ENCODE measurements at regions of chr17 and their contacts with region 1.

Region 1: GRCh38 chr17:6000426-6000825 is 69.8 kb upstream of the WSCD1 start:
- DNase-seq: no peak
- H3K4me3 ChIP-seq: no peak overlapping the region
- H3K27ac ChIP-seq: no peak overlapping the region
- H3K4me1 ChIP-seq: peaks cover 0 to 39% (median 10%) of the 10 kb centered on the region in 4 donors
- H3K27me3 ChIP-seq: no peaks in the 10 kb centered on the region
- CTCF ChIP-seq: no peak

Region 2: DNA sequence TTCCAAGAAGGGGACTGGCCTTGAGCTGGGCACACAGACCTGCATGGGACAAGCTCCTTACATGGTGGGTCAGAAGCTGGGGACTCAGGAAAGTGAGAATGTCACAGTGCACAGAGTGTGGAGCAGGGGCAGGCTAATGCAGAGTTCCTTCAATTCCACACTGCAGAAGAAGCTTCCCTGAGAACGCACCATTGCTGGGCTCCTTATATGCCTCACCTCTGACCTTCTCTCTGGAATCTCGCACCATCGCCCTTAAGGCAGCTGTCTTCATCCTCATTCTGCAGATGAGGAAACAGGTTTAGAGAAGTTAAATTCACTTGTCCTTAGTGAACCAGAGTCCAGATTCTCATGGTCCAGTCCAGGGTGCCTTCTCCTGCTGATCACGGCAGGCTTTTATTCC is 89.2 kb before region 1 on chr17:
- intact Hi-C with region 1: no loop called
- DNase-seq: no peak
- H3K4me3 ChIP-seq: no peak overlapping the region
- H3K27ac ChIP-seq: no peak overlapping the region
- H3K4me1 ChIP-seq: no peaks in the 10 kb centered on the region
- H3K27me3 ChIP-seq: no peaks in the 10 kb centered on the region
- CTCF ChIP-seq: no peak

Region 3: GRCh38 chr17:6069539-6070429 is 69.4 kb after region 1 on chr17 and contains the start of gene WSCD1:
- intact Hi-C with region 1: loop called (anchors 10 kb)
- DNase-seq: no peak
- H3K4me3 ChIP-seq: peak within 1 kb of the TSS; percentile 83 to 87
- H3K27ac ChIP-seq: peak within 1 kb of the TSS; percentile 42 to 57
- H3K4me1 ChIP-seq: peaks cover 0 to 26% (median 18%) of the 10 kb centered on the region in 4 donors
- H3K27me3 ChIP-seq: peaks cover 0 to under 1% of the 10 kb centered on the region in 2 donors
- CTCF ChIP-seq: no peak

Region 4: DNA sequence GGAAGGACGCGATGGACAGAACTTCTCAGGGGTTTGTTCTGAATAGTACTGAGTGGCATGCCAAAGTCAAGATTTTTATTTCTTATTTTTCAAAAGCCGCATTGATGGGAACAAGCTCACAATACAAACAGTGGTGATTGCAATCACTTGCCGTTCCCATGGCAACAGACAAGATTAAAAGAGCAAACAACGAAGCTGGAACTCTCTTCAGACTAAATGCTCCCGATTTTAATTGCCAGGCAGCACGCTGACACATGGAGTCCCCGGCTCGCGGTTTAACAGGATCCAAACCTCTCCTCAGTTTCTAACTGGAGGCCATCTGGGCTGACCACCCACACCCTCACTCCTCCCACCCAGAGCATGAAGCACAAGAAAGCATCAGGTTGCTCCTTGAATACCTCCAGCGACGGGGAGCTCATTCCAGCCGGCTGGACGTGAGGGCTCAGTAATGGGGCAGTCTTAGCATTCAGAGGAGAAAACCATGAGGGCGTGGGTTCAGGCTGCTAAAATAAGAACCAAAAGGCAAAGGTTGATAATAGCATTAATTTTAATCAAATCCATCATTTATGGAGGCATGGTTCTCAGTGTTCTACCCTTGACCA is 393.0 kb after region 1 on chr17:
- intact Hi-C with region 1: no loop called
- DNase-seq: peak in 1 of 2 donors; percentile 15
- H3K4me3 ChIP-seq: no peak overlapping the region
- H3K27ac ChIP-seq: no peak overlapping the region
- H3K4me1 ChIP-seq: no peaks in the 10 kb centered on the region
- H3K27me3 ChIP-seq: peaks cover 0 to 27% of the 10 kb centered on the region in 2 donors
- CTCF ChIP-seq: no peak